Activated B cell treated with CpG ODN at 0.5 μM for 24 hours (primary cell): ENCODE measurements at regions of chr5 and their contacts with region 1.

Region 1: DNA sequence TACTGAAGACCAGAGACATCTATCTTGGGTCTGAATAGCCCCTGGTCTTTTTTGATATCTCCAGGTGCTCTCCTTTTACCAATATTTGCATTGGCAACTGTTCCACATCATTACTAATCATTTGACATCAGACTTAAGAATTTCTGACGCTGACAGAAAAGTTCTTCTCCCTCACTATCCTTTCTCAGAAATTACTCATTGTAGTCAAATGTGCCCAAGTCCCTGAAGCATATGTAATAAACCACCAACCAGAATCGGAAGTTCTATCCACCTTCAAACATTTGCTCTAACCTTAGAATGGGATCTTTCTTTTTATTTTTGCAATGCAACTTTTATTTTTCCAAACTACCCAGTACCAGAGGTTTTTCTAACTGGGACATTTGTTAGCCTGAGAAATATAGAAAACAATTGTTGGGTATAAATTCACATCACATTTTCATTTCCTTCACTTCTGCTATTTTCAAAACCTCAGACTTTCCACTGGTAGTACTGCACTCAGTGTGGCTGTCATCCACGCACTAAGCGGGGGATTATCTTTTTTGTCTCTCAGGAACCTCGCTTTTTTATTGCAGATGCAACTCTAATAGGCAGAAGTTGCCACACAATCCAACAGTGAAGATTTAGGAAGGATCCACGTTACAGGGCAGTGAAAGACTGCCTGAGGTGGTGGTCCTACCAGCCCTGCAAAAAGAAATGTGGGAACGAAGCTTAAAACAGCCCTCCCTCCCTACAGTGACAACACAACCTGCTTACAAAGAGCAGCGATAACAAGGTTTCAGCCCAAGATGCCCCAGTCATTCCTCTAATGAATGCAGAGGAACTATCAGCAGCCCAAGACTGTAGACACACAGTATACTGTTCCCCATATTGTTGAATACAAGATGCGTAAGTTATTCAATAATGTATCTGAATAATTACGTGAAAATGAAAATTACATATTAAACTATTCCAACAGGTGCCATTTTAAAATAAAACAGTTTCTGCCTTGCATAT is 201.2 kb downstream of the EBF1 start:
- DNase-seq: peak; percentile 33
- ATAC-seq: peak; percentile 74
- H3K4me3 Mint-ChIP-seq: peak overlapping the region; percentile 25
- H3K27ac Mint-ChIP-seq: peak overlapping the region; percentile 93
- H3K4me1 Mint-ChIP-seq: peaks cover 78% of the 10 kb centered on the region
- H3K27me3 Mint-ChIP-seq: no peaks in the 10 kb centered on the region
- CTCF ChIP-seq: no peak

Region 2: DNA sequence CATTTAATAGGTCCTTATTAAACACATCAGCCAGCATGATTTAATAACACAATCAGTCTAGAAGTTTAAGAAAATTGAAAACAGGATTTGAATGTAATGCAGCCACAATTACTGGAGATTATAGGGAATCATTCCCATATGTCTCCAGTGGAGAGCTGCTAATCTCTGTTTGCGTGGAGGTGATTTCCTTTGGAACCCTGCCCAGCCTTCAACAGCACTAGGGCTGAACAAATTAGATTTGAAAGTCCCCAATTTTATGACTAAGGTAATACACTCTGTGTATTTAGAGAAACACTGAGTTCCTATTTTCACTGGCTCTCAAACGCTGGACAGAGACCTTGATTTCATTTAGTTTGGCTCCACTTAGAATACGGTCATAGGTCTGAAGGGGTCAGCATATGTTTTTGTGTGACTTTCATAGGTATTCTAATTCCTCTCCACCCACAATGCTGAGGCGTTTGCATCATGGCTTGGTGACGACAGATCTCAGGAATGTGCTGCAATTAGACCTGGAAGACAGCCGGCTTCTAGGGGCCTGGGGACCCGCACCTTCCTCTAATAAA is 307.1 kb before region 1 on chr5:
- CTCF ChIA-PET with region 1: no interaction called
- POLR2A ChIA-PET with region 1: no interaction called
- intact Hi-C with region 1: no loop called
- DNase-seq: no peak
- ATAC-seq: no peak
- H3K4me3 Mint-ChIP-seq: no peak overlapping the region
- H3K27ac Mint-ChIP-seq: no peak overlapping the region
- H3K4me1 Mint-ChIP-seq: peaks cover 17% of the 10 kb centered on the region
- H3K27me3 Mint-ChIP-seq: no peaks in the 10 kb centered on the region
- CTCF ChIP-seq: no peak

Region 3: GRCh38 chr5:158770506-158770905 is 128.0 kb before region 1 on chr5:
- CTCF ChIA-PET with region 1: no interaction called
- POLR2A ChIA-PET with region 1: interaction called, 11 read pairs
- intact Hi-C with region 1: loop called (anchors 1 kb)
- DNase-seq: no peak
- ATAC-seq: no peak
- H3K4me3 Mint-ChIP-seq: peak overlapping the region; percentile 16
- H3K27ac Mint-ChIP-seq: peak overlapping the region; percentile 59
- H3K4me1 Mint-ChIP-seq: peaks cover 91% of the 10 kb centered on the region
- H3K27me3 Mint-ChIP-seq: no peaks in the 10 kb centered on the region
- CTCF ChIP-seq: no peak

Region 4: DNA sequence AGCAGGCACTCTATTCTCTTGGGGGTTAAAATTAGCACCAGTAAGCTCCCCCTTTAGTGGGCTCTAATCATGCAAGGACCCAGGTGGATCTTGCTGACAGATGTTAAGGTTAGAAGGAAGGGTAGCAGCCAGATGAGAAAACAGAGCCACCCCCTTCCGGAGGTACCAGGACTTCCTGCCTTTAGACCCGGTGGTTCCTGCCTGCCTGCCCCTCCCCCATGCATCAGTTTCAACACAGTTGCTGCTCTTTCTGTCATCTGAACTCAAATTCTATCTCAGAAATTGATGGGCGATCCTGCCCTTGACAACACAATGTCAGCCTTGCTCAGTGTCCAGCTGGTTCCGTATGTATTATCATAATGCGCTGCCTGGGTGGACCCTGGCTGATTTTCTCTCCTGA is 86.1 kb before region 1 on chr5:
- CTCF ChIA-PET with region 1: no interaction called
- POLR2A ChIA-PET with region 1: interaction called, 15 read pairs
- intact Hi-C with region 1: no loop called
- DNase-seq: peak; percentile 42
- ATAC-seq: peak; percentile 79
- H3K4me3 Mint-ChIP-seq: peak overlapping the region; percentile 55
- H3K27ac Mint-ChIP-seq: peak overlapping the region; percentile 89
- H3K4me1 Mint-ChIP-seq: peaks cover 99% of the 10 kb centered on the region
- H3K27me3 Mint-ChIP-seq: no peaks in the 10 kb centered on the region
- CTCF ChIP-seq: no peak

Region 5: DNA sequence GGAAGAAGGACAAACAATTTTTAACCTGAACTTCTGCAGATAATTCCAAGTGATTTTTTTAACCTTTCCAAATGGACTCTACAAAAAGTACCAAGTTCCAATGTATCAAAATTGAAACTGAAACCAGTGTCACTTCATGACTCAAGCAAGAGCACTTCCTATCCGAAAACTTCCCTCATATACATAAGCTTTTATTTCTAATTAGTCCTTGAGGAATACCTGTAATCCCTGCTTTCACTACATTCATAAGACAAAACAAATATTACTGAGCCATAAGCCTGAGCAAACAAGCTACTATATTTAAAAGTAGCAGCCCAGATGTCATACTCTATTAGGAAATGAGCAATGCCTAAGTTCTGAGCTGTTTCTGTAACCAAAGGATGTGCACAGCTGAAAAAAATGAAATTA is 23.2 kb before region 1 on chr5:
- CTCF ChIA-PET with region 1: interaction called, 9 read pairs
- POLR2A ChIA-PET with region 1: interaction called, 20 read pairs
- intact Hi-C with region 1: no loop called
- DNase-seq: no peak
- ATAC-seq: peak; percentile 36
- H3K4me3 Mint-ChIP-seq: peak overlapping the region; percentile 72
- H3K27ac Mint-ChIP-seq: peak overlapping the region; percentile 93
- H3K4me1 Mint-ChIP-seq: peaks cover 93% of the 10 kb centered on the region
- H3K27me3 Mint-ChIP-seq: no peaks in the 10 kb centered on the region
- CTCF ChIP-seq: no peak

Region 6: GRCh38 chr5:158910782-158911692 is 12.6 kb after region 1 on chr5:
- CTCF ChIA-PET with region 1: no interaction called
- POLR2A ChIA-PET with region 1: interaction called, 4 read pairs
- intact Hi-C with region 1: loop called (anchors 1 kb)
- DNase-seq: no peak
- ATAC-seq: peak; percentile 72
- H3K4me3 Mint-ChIP-seq: peak overlapping the region; percentile 61
- H3K27ac Mint-ChIP-seq: peak overlapping the region; percentile 74
- H3K4me1 Mint-ChIP-seq: peaks cover 97% of the 10 kb centered on the region
- H3K27me3 Mint-ChIP-seq: no peaks in the 10 kb centered on the region
- CTCF ChIP-seq: no peak

Region 7: DNA sequence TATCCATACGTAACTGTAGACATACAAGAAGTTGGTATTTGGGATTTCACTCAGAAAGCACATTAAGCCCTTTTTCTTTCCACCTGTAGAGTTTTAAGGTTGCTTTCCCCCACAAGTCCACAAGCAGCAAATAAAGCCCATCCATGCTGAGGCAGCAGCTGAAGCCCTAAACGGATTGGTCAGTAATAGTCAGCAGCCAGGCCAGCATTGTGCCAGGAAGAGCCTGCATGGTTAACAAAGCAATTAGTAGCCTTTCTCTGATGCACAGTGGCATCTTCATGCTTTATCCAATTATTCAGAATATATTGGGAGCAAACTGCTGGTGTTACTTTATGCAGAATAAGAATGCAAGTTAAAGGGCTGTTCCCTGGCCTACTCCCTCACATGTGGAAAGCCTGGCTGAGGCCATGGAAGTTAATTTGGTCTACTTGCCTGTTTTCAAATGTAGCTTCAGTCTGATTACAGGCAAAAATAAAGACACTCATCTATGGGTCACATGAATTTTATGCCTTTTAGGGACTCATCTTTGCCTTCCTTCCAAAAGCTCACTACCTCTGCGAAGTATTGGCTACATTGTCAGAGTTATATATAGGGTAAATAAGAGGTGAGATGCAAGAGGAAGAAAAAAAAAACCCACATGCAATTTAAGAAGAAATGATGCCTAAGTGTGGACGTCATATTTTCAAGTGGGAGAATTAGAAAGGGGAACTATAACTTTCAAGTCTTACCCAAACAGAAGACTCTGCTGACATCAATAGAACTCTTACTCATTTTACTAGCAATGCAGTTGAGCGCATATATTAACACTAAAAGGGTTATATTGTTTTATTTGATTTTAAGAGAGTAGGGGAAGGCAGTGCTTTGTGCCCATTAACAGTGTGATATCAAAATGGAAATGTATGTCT is 185.3 kb after region 1 on chr5:
- CTCF ChIA-PET with region 1: no interaction called
- POLR2A ChIA-PET with region 1: interaction called, 8 read pairs
- intact Hi-C with region 1: loop called (anchors 1 kb)
- DNase-seq: no peak
- ATAC-seq: peak; percentile 93
- H3K4me3 Mint-ChIP-seq: peak overlapping the region; percentile 72
- H3K27ac Mint-ChIP-seq: peak overlapping the region; percentile 93
- H3K4me1 Mint-ChIP-seq: peaks cover 70% of the 10 kb centered on the region
- H3K27me3 Mint-ChIP-seq: no peaks in the 10 kb centered on the region
- CTCF ChIP-seq: no peak

Region 8: GRCh38 chr5:159198063-159199036 is 299.9 kb after region 1 on chr5:
- CTCF ChIA-PET with region 1: no interaction called
- POLR2A ChIA-PET with region 1: no interaction called
- intact Hi-C with region 1: no loop called
- DNase-seq: no peak
- ATAC-seq: peak; percentile 98
- H3K4me3 Mint-ChIP-seq: peak overlapping the region; percentile 73
- H3K27ac Mint-ChIP-seq: peak overlapping the region; percentile 91
- H3K4me1 Mint-ChIP-seq: peaks cover 57% of the 10 kb centered on the region
- H3K27me3 Mint-ChIP-seq: no peaks in the 10 kb centered on the region
- CTCF ChIP-seq: no peak